Activated B cell treated with CpG ODN at 0.5 μM for 24 hours (primary cell): ENCODE measurements at regions of chr1 and their contacts with region 1.

Region 1: DNA sequence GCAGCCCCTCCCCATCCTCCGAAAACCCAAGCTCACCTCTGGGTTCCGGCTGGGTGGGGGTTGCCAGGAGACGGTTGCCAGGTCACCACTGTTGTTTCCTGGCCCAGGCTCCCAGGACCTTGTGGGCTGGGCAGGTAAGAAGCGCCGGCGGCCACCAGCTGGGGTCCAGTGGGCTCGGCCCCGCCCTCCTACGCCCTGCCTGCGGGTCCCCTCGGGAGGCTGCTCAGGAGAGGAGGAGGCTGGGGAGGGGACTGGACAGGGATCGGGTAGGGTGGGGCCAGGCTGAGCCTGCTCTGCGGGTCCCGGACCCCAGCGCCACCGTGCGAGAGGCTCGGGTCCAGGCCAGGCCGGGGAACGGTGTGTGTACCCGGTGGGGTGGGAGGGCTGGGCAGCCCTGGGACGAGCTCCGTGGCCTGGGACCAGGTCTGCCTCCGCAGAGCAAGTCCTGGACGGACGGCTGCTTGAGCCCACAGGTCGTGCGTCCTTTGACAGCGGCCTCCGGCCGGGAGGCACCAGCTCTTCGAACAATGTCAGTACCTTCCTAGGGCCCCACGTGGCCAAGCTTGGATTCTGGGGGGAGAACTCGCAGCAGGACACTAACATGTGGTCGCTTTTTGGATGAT is at the start of gene TTLL10:
- DNase-seq: peak; percentile 59
- ATAC-seq: peak; percentile 21
- H3K4me3 Mint-ChIP-seq: peak within 1 kb of the TSS; percentile 28
- H3K27ac Mint-ChIP-seq: no peak within 1 kb of the TSS
- H3K4me1 Mint-ChIP-seq: peaks cover 49% of the 10 kb centered on the region
- H3K27me3 Mint-ChIP-seq: peaks cover 10% of the 10 kb centered on the region
- CTCF ChIP-seq: no peak
- total RNA-seq, gene TTLL10: 0.16 TPM in 1 of 2 replicates, not detected in the other

Region 2: DNA sequence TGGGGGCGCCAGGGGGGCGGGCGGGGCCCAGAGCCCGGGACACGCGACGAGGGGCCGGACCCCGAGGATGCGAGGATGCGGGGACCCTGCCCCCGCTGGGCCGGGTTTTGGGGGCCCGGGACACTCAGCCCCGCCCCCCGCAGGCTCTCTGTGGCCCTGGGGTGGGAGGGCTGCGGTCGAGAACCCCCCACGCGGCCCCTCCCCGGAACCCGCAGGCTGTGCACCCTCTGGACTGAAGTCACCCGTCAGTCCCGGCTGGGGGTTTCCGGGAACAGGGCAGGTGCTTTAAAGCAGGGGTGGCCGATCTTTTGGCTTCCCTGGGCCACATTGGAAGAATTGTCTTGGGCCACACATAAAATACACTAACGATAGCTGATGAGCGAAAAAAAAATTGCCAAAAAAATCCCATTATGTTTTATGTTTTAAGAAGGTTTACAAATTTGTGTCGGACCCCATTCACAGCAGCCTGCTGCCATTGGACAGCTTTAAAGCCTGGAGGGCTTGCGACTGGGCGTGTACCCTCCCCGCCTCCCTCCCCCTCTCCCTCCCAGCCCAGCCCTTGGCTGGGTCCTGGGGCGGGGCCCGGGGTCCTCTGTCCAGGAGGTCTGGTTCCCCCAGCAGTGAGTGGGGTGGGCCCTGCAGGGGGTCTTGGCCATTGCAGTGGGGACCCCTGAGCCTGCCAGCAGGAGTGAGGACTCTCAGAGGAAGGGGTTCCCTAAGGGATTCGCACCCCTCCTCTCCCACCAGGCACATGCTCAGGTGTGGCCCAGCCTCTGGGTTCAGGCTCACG is 36.5 kb before region 1 on chr1:
- CTCF ChIA-PET with region 1: no interaction called
- POLR2A ChIA-PET with region 1: interaction called, 12 read pairs
- intact Hi-C with region 1: loop called (anchors 2 kb)
- DNase-seq: peak; percentile 78
- ATAC-seq: peak; percentile 75
- H3K4me3 Mint-ChIP-seq: peak overlapping the region; percentile 76
- H3K27ac Mint-ChIP-seq: peak overlapping the region; percentile 90
- H3K4me1 Mint-ChIP-seq: peaks cover 37% of the 10 kb centered on the region
- H3K27me3 Mint-ChIP-seq: no peaks in the 10 kb centered on the region
- CTCF ChIP-seq: no peak